ENCODE measurements at regions of chr1 and their contacts with region 1.

Region 1: DNA sequence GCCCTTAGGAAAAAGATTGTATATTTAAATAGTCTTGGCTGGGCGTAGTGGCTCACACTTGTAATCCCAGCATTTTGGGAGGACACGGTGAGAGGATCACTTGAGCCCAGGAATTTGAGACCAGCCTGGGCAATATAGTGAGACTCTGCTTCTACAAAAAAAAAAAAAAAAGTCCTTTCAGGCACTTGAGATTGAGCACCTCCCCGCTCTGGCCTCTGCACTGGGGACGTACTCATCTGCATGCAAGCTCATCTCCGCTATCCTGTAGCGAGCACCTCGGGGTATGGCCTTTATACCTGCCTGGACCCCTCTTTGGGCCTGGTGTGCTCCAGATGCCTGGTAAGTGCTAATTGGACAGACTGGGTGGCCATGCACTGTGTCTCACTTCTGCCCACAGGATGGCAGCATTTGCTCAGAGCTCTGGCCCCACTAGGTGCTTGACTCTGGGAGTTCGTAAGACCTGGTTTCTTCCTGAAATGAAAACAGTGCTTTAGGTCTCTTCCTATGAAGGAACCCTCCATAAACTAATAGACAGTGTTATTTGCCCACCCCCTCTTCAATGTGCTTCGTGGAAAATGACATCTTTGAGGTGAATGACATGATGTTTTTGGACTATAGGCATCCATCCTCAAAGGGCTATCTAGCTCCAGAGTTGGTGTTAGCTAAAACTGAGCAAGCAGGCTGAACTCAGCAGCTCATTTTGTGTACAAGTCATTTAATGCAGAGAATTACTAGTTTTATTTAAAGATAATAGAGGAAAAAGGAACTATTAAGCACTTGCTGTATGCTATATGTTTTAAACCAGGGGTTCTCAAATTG is 61.7 kb upstream of the ADAR start:
- H3K4me3 ChIP-seq: no peak overlapping the region
- H3K27ac ChIP-seq: no peak overlapping the region
- H3K4me1 ChIP-seq: no peaks in the 10 kb centered on the region
- CTCF ChIP-seq: peak; percentile 80

Region 2: GRCh38 chr1:154583773-154584172 is 85.9 kb before region 1 on chr1:
- CTCF ChIA-PET with region 1: no interaction called
- POLR2A ChIA-PET with region 1: no interaction called
- H3K4me3 ChIP-seq: no peak overlapping the region
- H3K27ac ChIP-seq: no peak overlapping the region
- H3K4me1 ChIP-seq: no peaks in the 10 kb centered on the region
- CTCF ChIP-seq: no peak

Region 3: DNA sequence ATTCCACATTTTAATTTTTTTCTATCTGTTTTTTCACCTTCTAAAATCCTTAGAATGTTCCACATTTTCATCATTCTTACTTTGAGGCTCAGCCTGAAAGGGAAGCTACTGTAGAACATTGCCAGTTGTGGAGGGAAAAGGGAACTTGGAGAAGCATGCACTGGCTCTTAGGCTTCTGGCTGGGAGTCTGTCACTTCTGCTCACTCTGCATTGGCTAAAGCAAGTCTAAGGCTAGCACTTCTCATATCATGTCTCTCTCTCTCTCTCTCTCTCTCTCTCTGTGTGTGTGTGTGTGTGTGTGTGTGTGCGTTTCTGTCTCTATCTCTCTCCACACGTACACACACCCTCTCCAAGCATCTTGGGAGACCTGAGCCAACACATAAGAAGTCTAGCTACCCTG is 12.1 kb before region 1 on chr1:
- CTCF ChIA-PET with region 1: interaction called, 10 read pairs
- POLR2A ChIA-PET with region 1: no interaction called
- H3K4me3 ChIP-seq: no peak overlapping the region
- H3K27ac ChIP-seq: no peak overlapping the region
- H3K4me1 ChIP-seq: no peaks in the 10 kb centered on the region
- CTCF ChIP-seq: no peak

Region 4: DNA sequence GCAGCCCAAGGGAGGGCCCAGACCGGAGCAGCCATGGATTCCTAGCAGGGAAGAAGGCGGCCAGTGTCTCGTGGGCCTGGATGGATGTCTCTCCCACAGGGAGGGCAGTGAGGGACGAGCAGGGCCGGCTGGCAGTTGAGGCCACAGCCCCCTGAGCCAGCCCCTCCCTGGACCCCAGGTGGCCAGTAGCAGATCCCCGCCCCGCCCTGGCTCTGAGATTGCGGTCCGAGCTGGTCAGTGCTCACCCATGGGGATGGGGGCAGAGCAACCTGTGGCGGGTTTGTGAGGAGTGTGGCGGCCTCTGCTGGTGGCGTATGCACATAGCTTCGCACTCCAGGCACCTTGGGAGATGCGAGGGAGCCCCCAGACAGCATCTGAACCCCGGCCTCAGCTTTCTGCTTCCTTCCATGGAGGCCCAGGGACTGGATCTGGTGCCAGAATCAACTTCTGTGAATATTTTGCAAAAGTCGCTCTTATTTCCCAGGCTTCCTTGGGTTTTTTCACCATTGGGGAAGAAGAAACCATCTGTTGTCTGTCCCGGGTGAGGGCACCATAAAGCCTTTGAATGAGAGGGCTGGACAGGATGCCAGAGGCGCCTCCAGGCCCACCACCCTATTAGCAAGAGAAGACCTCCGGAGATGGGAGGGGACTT is 208.8 kb after region 1 on chr1:
- CTCF ChIA-PET with region 1: interaction called, 24 read pairs
- POLR2A ChIA-PET with region 1: no interaction called
- H3K4me3 ChIP-seq: no peak overlapping the region
- H3K27ac ChIP-seq: no peak overlapping the region
- H3K4me1 ChIP-seq: no peaks in the 10 kb centered on the region
- CTCF ChIP-seq: peak; percentile 86

Region 5: GRCh38 chr1:154891452-154891851 is 221.8 kb after region 1 on chr1:
- CTCF ChIA-PET with region 1: interaction called, 13 read pairs
- POLR2A ChIA-PET with region 1: no interaction called
- H3K4me3 ChIP-seq: no peak overlapping the region
- H3K27ac ChIP-seq: no peak overlapping the region
- H3K4me1 ChIP-seq: no peaks in the 10 kb centered on the region
- CTCF ChIP-seq: no peak

Region 6: GRCh38 chr1:154961497-154962262 is 292.0 kb after region 1 on chr1 and contains the start of gene PYGO2:
- CTCF ChIA-PET with region 1: no interaction called
- POLR2A ChIA-PET with region 1: no interaction called
- H3K4me3 ChIP-seq: peak within 1 kb of the TSS; percentile 90
- H3K27ac ChIP-seq: peak within 1 kb of the TSS; percentile 94
- H3K4me1 ChIP-seq: peaks cover 8% of the 10 kb centered on the region
- CTCF ChIP-seq: peak; percentile 87; the same call in 1 of the 2 replicates